Motor neuron (in vitro differentiated cells): ENCODE measurements at regions of chr19 and their contacts with region 1.

Region 1: DNA sequence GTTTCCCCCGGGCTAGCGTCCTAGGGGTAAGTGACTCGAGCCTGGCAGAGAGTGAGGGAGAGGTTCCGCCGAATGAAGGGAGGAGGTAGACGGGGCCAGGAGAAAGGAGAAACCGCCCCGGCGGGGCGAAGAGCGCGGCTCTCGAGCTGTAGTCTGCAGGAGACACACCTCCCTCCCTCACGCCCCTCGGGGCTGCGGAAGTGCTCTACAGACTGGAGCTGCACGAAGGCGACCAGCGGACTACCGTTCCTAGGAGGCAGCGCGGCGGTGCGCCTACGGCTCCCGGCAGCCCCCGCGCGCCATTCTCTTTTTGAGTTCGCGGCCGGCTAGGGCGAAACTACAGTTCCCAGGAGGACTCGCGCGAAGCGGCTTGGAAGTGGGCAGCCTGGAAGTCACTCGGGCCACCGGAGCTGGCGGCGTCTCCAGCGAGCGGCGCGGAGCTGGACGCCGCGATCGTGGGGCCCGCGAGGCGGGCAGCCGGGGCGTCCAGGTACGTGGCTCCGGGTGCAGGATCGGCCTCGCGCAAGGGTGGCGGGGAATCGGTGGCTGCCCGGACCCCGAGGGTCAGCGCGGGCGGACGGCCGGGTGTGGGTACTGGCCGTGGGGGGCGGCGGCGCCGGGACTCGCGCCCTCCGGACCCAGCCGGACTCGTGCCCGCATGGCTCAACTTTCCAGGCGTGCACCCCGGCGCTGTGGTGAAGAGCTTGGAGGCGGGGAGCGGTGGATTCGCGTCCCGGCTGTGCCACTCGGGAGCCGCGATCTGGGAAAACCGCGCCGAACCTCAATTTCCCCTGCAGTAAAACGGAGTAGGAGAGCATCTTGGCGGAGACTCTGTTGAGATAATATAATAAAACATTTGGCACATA is at the start of gene SIPA1L3:
- ATAC-seq: peak; percentile 93 to 97 (median 96)
- H3K4me3 ChIP-seq: peak within 1 kb of the TSS; percentile 63 to 78 (median 73)
- H3K27ac ChIP-seq: peak within 1 kb of the TSS; percentile 81 to 85
- H3K4me1 ChIP-seq: peaks cover 17 to 18% of the 10 kb centered on the region in 2 donors
- total RNA-seq, gene SIPA1L3: 8.5 to 22.1 (median 15.1) TPM

Region 2: DNA sequence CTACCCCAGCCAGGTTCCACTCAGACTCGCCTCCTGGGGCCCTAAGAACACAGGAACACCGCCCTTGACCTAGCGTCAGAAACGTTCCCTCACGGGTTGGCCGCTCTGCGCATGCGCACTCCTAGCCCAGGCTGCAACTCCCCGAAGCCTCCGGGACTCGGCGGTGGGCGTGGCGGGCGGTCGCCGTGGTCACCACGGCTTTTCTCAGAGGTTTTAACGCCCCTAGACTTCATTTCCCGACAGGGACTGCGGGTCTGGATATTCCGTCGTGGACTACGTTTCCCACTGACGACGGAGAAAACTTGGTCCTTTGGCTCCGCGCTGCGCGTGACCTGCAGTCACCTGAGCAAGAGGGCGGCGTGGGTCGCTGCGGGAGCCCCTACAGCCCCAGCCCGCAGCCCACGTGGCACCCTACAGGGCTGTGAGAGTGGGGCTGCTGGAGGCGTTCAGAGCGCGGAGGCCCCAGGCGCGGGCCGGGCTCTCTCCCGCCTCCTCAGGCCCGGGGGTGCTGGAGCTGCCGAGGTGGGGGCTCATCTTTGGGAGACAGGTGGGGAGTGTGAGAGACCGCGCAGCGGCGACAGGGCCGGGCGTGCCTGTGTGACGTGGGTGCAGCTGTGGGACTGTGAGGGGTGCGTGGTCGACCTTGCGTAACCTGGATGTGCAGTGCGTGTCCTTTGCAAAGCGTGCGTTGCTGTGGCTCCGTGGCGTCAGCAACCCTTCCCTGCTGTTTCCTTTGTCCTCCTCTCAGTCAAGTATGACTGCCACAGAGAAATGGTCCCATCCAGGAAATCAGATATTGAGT is 89.7 kb before region 1 on chr19:
- in situ Hi-C with region 1: no loop called
- ATAC-seq: peak in 6 of 8 experiments; percentile 57 to 94 (median 94)
- H3K4me3 ChIP-seq: peak overlapping the region; percentile 35 to 51 (median 36)
- H3K27ac ChIP-seq: peak overlapping the region; percentile 1 to 57
- H3K4me1 ChIP-seq: no peaks in the 10 kb centered on the region

Region 3: DNA sequence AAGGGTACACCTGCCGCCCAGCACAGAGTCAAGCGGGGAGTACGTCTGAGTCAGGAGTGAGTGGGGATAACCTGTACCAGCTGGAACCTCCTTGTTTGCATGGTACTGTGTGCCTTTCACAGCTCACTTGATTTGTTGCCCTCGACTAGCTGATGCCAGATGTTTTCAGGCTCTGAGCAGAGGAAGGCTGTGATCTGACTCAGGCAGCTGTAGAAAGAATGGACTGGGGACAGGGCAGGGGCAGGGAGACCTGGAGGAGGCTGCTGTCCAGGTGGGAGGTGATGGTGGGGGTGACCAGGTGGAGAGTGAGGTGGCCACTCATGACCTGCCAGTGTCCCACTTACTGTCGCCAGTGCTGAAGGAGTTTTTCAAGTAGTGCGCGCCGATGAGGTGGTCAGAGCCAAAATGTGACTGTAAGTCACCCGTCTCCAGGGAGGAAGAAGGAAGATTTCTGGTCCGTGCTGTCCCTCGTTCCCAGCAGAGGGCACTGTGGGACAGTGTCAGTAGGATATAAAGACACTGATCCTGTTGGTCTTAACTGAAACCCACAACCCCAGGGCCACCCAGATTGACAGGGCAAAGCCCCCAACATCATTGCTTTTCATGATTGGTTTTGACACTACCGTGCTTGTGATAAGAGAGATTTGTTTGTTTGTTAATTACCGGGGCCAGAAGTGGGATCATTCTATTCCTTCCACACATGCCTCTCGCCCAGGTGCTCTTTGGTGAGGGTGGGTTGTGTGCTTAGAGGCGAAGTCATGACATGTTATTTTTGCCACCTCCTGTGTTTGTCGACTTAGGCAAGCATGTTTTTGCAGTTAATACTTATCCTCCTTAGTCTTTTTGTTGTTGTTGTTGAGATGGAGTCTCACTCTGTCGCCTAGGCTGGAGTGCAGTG is 188.6 kb after region 1 on chr19:
- in situ Hi-C with region 1: loop called in 4 of 9 experiments (anchors 25 kb)
- ATAC-seq: peak; percentile 92 to 98 (median 92)
- H3K4me3 ChIP-seq: no peak overlapping the region
- H3K27ac ChIP-seq: peak overlapping the region; percentile 0 to 37
- H3K4me1 ChIP-seq: peaks cover 3 to 11% of the 10 kb centered on the region in 2 donors

Region 4: DNA sequence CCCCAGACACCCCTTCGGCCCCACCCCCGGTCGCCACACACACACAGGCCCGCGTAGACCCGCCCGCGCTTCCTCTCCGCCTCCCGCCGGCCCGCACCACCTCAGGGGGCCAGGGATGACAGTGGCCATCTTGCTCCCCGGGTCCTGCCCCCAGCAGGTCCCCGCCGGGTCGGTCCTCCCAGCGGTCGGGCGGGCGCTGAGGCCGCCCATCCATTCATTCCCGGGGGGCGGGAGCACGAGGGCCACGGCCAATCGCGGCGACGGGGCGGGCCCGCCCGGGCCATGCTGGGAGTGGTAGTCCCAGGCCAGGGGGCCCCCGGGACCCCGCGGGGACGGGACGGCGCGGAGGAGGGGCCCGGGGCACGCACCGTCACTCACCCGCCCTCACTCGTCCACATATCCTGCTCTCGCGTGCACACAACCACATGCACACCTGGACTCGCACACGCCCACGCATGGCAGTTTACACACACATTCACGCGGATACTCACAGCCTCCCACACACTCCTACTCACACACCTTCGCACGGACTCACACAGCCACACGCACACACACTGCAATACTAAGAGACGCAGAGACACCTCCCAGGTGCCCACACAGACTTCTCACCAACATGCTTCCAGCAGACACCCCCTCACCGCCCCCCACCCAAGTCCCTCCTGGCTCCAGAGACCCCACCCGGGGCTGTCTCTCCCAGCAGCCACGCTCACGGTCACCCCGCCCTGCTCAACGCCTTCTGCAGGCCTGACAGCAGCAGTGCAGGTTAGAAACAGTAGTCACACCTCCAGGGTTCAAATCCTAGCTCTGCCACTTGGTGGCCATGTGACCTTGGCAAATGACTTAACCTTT is 317.1 kb after region 1 on chr19 and contains the start of gene DPF1:
- in situ Hi-C with region 1: loop called in 1 of 9 experiments (anchors 25 kb)
- ATAC-seq: peak; percentile 81 to 98 (median 86)
- H3K4me3 ChIP-seq: peak within 1 kb of the TSS; percentile 57 to 84 (median 61)
- H3K27ac ChIP-seq: peak within 1 kb of the TSS; percentile 58 to 61
- H3K4me1 ChIP-seq: peaks cover 24 to 26% of the 10 kb centered on the region in 2 donors
- total RNA-seq, gene DPF1: 1.3 to 60.4 (median 25.9) TPM

Region 5: DNA sequence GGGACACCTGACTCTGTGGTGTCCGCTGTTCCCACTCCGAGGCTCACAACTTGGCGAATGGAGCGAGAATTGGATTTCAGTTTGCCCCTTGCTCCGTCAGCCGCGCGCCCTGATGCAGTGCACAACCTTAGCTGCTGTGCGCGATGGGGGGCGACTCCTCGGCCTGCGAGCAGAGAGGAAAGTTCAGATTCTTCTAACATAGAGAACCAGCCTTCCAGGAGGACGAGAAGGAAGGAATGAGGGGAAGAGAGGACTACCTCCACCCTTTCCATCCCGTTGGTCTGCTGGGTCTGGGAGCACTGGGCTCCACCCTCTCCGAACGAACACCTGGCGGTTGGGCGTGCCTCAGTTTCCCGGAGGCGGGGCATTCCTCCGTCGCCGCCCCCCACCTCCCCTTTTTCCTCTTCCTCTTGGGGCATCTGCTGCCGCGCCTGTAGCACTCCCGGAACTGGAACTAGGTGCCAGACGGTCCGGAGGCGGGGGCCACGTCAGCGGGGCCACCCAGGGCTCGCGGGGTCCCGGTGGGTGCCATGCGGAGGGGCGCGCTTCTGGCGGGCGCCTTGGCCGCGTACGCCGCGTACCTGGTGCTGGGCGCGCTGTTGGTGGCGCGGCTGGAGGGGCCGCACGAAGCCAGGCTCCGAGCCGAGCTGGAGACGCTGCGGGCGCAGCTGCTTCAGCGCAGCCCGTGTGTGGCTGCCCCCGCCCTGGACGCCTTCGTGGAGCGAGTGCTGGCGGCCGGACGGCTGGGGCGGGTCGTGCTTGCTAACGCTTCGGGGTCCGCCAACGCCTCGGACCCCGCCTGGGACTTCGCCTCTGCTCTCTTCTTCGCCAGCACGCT is 412.5 kb after region 1 on chr19 and contains the start of gene KCNK6:
- in situ Hi-C with region 1: loop called in 1 of 9 experiments (anchors 10 kb)
- ATAC-seq: peak; percentile 3 to 21 (median 8)
- H3K4me3 ChIP-seq: peak within 1 kb of the TSS; percentile 30 to 40 (median 36)
- H3K27ac ChIP-seq: no peak within 1 kb of the TSS
- H3K4me1 ChIP-seq: peaks cover 5 to 10% of the 10 kb centered on the region in 2 donors
- total RNA-seq, gene KCNK6: 0.38 to 5.7 (median 0.65) TPM

Region 6: DNA sequence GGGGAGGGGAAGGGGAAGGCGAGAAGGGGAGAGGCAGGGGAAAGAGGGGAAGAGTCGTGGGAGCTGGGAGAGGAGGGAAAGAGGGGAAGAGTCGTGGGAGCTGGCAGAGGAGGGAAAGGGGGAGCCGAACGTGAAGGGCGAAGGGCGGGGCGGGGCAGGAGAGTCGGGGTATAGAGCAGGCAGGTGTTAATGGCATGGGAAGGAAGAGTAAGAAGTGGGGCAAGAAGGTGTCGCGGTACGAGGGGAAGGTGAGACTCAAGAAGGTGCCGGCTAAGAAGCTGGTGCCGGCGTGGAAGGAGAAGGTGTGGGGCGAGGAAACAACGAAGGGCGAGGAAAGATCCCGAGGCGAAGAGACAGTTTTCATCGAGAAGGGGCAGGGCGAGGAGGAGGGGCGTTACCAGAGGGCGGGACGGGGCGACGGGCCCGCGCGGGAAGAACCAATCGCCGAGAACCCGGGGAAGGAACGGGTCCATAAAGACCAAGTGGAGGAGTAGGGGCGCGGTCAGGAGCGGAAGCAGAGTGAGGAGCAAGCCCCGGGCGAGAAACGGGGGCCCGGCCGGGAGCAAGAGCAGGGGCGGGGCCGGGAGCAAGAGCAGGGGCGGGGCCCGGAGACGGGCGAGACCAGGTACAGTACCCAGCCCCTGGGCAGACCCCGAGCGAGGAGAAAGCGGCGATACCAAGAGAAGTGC is 429.0 kb after region 1 on chr19:
- in situ Hi-C with region 1: loop called in 2 of 9 experiments (anchors 25 kb)
- ATAC-seq: peak; percentile 74 to 81 (median 76)
- H3K4me3 ChIP-seq: peak overlapping the region; percentile 47 to 71 (median 51)
- H3K27ac ChIP-seq: peak overlapping the region; percentile 78 to 87
- H3K4me1 ChIP-seq: peaks cover 13 to 14% of the 10 kb centered on the region in 2 donors

Region 7: GRCh38 chr19:38374429-38375176 is 467.5 kb after region 1 on chr19 and contains the start of gene PSMD8:
- in situ Hi-C with region 1: loop called in 1 of 9 experiments (anchors 25 kb)
- ATAC-seq: peak; percentile 90 to 97 (median 95)
- H3K4me3 ChIP-seq: peak within 1 kb of the TSS; percentile 60 to 89 (median 80)
- H3K27ac ChIP-seq: peak within 1 kb of the TSS; percentile 94 to 97
- H3K4me1 ChIP-seq: peaks cover 10 to 11% of the 10 kb centered on the region in 2 donors
- total RNA-seq, gene PSMD8: 165 to 302 (median 214) TPM